ENCODE measurements at regions of chr1 and their contacts with region 1.

Region 1: GRCh38 chr1:155527677-155528076 is 34.9 kb downstream of the ASH1L start:
- DNase-seq: no peak
- ATAC-seq: no peak
- H3K4me3 ChIP-seq: no peak overlapping the region
- H3K27ac ChIP-seq: no peak overlapping the region
- H3K4me1 ChIP-seq: no peaks in the 10 kb centered on the region
- H3K27me3 ChIP-seq: no peaks in the 10 kb centered on the region
- CTCF ChIP-seq: no peak

Region 2: GRCh38 chr1:155499953-155500639 is 27.6 kb before region 1 on chr1:
- CTCF ChIA-PET with region 1: no interaction called
- POLR2A ChIA-PET with region 1: interaction called, 12 read pairs
- in situ Hi-C with region 1: no loop called
- intact Hi-C with region 1: no loop called
- DNase-seq: no peak
- ATAC-seq: 0 out of 2 replicates have a peak, but pooled peaks have one; percentile 27
- H3K4me3 ChIP-seq: no peak overlapping the region
- H3K27ac ChIP-seq: no peak overlapping the region
- H3K4me1 ChIP-seq: peaks cover 16% of the 10 kb centered on the region
- H3K27me3 ChIP-seq: no peaks in the 10 kb centered on the region
- CTCF ChIP-seq: no peak

Region 3: DNA sequence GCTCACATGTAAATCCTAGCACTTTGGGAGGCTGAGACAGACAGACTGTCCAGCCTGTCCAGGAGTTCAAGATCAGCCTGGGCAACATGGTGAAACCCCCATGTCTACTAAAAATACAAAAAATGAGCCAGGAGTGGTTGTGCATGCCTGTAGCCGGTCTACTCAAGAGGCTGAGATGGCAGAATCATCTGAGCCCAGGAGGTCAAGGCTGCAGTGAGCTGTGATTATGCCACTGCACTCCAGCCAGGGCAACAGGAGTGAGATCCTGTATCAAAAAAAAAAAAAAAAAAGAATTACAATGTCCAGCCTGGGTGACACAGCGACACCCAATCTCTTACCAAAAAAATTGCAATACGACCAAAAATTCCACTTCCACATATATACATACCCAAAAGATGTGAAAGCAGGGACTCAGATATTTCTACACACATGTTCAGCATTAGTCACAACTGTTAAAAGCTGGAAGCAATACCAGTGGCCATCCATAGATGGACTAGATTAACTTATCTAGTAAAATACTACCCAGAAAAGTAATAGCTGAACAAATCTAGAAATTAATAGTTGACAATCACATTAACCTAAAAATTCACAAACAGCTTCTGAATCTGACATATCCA is 14.3 kb before region 1 on chr1:
- CTCF ChIA-PET with region 1: interaction called, 10 read pairs
- POLR2A ChIA-PET with region 1: no interaction called
- in situ Hi-C with region 1: no loop called
- intact Hi-C with region 1: no loop called
- DNase-seq: no peak
- ATAC-seq: no peak
- H3K4me3 ChIP-seq: no peak overlapping the region
- H3K27ac ChIP-seq: no peak overlapping the region
- H3K4me1 ChIP-seq: no peaks in the 10 kb centered on the region
- H3K27me3 ChIP-seq: no peaks in the 10 kb centered on the region
- CTCF ChIP-seq: no peak